Posterior cingulate gyrus (tissue), 11 donors: ENCODE measurements at regions of chr14 and their contacts with region 1.

Region 1: DNA sequence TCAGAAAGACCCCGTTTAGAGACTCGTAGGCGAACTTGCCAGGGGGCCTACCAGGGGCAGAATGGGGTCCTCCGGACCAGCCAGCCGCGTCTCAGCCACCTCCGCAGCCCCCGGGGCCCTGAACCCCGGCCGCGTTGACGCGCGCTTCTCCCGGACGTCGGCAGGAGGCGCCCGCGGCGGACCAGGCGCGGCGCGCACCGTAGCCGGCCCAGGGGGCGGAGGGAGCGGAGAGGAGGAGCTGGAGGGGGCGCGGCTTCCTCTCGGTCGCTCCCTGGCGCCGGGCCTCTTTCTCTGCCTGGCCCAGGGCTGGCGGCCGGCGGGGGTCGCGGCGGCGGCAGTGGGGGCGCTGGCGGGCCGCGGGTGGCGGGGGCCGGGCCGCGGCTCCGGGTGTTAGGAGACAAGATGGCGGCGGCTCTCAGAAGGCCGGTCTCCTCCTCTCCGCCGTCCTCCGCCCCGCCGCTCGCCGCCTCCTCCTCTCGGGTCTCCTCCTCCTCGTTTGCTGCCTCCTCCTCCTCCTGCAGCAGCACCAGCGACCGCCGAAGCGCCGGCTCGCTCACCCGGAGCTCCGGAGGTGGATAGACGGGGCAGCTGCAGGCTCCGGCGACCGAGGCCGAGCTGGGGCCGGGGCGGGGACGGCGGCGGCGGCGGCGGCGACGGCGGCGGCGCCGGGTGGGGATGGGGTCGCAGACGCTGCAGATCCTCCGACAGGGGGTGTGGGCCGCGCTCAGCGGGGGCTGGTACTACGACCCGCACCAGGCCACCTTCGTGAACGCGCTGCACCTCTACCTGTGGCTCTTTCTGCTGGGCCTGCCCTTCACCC is at the start of gene PCNX1:
- DNase-seq: peak; percentile 75 to 97 (median 81)

Region 2: DNA sequence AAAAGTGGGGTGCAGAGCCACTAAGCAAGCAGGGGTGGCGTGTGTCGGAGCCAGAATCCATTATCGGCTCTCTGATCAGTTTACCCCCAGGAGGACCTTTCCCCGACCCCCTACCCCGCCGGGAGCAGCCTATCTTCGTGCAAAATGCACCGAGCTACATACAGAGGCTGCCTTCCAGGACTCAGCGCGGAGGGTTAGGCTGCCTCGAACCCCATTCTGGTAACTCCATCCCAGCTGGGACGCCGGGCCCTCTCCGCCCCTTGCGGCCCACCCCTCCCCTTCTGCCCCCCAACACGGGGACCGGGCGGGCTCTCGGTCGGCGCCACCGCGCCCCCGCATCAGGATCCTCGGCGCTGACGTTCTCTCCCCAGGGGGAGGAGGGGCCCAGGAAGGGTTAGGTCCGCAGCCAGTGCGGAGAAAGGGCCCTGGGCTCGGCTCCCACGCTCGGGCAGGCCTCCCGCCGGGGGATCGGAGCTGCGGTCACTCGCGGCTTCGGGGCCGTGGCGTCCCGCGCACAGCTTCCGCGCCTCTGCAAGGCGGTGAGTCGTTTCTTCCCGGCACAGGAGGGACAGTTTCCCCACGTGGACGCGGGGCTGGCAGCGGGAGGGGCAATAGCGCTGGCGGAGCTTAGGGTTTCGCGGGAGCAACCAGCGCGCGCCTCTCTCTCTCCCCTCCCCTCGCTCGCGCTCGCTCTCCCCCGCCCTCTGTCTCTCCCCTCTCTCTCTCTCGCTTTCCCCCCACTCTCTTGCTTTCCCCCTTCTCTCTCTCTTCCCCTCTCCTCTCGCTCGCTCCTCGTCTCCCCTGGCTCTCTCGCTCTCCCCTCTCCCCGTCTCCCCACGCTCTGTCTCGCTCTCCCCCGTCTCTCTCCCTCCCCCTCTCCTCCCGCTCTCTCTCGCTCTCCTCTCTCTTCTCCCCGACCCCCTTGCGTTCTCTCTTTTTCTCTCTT is 85.5 kb before region 1 on chr14:
- intact Hi-C with region 1: loop called (anchors 5 kb)
- DNase-seq: peak in 8 of 10 donors; percentile 48 to 96 (median 75)

Region 3: DNA sequence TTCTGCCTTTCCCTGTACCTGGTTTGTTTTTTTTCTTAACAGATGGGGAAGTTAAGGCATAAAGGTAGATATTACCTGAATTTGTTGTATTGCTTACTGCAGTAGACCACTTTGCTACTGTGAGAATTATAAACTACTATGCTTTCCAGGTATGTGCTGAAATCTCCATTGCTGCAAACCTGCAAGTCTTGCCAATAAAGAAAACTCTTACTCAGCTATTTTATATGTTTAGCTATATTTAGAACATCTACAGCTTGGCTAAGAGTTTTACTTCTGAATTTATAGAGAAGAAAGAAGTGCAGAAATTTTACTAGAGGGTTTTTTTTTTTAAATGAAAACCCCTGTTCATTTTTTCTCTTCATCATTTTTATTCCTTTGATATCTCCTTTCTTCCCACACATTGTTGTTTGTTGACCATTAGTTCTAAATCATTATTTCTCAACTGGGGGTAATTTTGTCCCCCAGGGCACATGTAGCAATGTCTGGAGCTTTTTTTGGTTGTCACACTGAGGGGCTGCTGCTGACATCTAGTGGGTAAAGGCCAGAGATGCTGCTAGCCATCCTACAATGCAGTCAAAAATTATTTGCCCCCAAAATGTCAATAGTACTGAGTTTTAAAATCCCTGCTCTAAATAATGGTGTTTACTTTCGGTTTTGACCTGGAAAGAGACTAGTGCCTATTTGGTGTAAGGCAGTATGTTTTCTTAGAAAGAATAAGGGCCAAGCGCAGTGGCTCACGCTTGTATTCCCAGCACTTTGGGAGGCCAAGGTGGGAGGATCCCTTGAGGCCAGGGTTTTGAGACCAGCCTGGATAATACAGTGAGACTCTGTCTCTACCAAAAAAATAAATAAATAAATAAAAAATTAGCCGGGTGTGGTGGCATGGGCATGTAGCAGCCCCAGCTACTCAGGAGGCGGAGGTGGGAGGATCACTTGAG is 48.4 kb after region 1 on chr14:
- intact Hi-C with region 1: loop called (anchors 5 kb)
- DNase-seq: peak in 3 of 10 donors; percentile 16 to 77 (median 23)

Region 4: GRCh38 chr14:70972107-70972976 is 65.0 kb after region 1 on chr14:
- intact Hi-C with region 1: loop called (anchors 1 kb)
- DNase-seq: peak; percentile 38 to 95 (median 85)